GM12878 (cell line): ENCODE measurements at regions of chr3 and their contacts with region 1.

Region 1: GRCh38 chr3:121995161-121996137 is 26.6 kb downstream of the ILDR1 start:
- DNase-seq: peak; percentile 74
- ATAC-seq: peak; percentile 72
- H3K4me3 ChIP-seq: 0 out of 2 replicates have a peak overlapping the region, but pooled peaks have one; percentile 32
- H3K27ac ChIP-seq: peak overlapping the region; percentile 67
- H3K4me1 ChIP-seq: peaks cover 66% of the 10 kb centered on the region
- H3K27me3 ChIP-seq: no peaks in the 10 kb centered on the region
- CTCF ChIP-seq: peak; percentile 56 to 71 (median 59)
- EP300 ChIP-seq: no peak; a peak in 1 of 4 replicates
- POLR2A ChIP-seq: no peak
- RAD21 ChIP-seq: peak; percentile 59

Region 2: DNA sequence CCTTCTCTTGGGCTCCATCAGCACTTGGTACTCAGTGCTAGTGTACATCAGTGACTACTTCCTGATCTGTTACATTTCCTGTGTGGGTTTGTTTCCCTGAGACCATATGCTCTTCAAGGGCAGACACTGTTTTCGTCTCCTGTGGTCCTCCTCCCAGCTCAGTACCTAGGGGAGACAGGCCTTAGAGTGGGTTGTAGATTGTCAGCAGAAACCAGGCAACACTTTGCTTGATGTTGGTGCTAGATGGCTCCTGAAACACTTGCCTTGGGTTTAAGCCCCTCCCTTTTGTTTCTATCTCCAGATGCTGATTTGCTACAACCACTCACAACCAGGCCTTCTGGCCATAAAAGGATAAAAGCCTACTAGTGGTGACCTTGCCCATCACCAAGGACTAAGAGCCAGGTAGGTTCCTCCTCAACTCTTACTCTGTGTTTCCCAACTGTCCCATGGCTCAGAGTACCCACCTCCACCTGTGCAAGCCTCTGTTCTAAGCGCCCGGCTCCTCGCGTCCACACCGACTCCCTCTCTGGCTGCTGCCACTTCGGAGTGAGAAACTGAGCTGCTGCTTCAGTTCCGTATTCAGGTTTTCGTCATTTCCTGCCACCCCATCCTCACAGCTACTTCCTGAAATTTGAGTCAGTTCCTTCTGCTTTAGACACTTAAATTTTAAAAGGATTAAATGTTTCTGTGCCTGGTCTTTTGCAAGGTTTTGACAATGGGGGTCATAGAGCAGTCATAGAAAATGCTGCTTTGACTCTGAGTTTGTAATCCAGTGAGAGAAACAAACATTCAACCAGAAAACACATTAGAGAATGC is 334.9 kb before region 1 on chr3 and contains the start of gene HCLS1:
- CTCF ChIA-PET with region 1: no interaction called
- POLR2A ChIA-PET with region 1: no interaction called
- RAD21 ChIA-PET with region 1: no interaction called
- SMC1A ChIA-PET with region 1: interaction called, 3 read pairs
- in situ Hi-C with region 1: no loop called
- intact Hi-C with region 1: loop called (anchors 10 kb)
- DNase-seq: peak; percentile 83
- ATAC-seq: peak; percentile 91
- H3K4me3 ChIP-seq: peak within 1 kb of the TSS; percentile 61
- H3K27ac ChIP-seq: peak within 1 kb of the TSS; percentile 97
- H3K4me1 ChIP-seq: peaks cover 26% of the 10 kb centered on the region
- H3K27me3 ChIP-seq: no peaks in the 10 kb centered on the region
- CTCF ChIP-seq: no peak
- EP300 ChIP-seq: 0 out of 4 replicates have a peak, but pooled peaks of 1 of the 2 experiments have one; percentile 25
- POLR2A ChIP-seq: peak; percentile 99
- RAD21 ChIP-seq: no peak
- polyA plus RNA-seq, gene HCLS1: 51.6 to 76.2 TPM

Region 3: GRCh38 chr3:121979734-121980449 is 15.6 kb before region 1 on chr3:
- CTCF ChIA-PET with region 1: interaction called, 5 read pairs
- POLR2A ChIA-PET with region 1: interaction called, 7 read pairs
- RAD21 ChIA-PET with region 1: interaction called, 4 read pairs
- SMC1A ChIA-PET with region 1: interaction called, 18 read pairs
- in situ Hi-C with region 1: no loop called
- intact Hi-C with region 1: no loop called
- DNase-seq: no peak
- ATAC-seq: peak; percentile 85
- H3K4me3 ChIP-seq: no peak overlapping the region
- H3K27ac ChIP-seq: peak overlapping the region; percentile 58
- H3K4me1 ChIP-seq: peaks cover 15% of the 10 kb centered on the region
- H3K27me3 ChIP-seq: no peaks in the 10 kb centered on the region
- CTCF ChIP-seq: no peak
- EP300 ChIP-seq: no peak
- POLR2A ChIP-seq: no peak
- RAD21 ChIP-seq: no peak

Region 4: GRCh38 chr3:122030381-122031122 is 35.1 kb after region 1 on chr3:
- CTCF ChIA-PET with region 1: interaction called, 9 read pairs
- POLR2A ChIA-PET with region 1: interaction called, 120 read pairs
- RAD21 ChIA-PET with region 1: interaction called, 17 read pairs
- SMC1A ChIA-PET with region 1: interaction called, 454 read pairs
- in situ Hi-C with region 1: no loop called
- intact Hi-C with region 1: loop called (anchors 5 kb)
- DNase-seq: peak; percentile 74
- ATAC-seq: peak; percentile 86
- H3K4me3 ChIP-seq: peak overlapping the region; percentile 41; the same call in 1 of the 2 replicates
- H3K27ac ChIP-seq: peak overlapping the region; percentile 89
- H3K4me1 ChIP-seq: peaks cover 37% of the 10 kb centered on the region
- H3K27me3 ChIP-seq: no peaks in the 10 kb centered on the region
- CTCF ChIP-seq: no peak
- EP300 ChIP-seq: no peak
- POLR2A ChIP-seq: 0 out of 2 replicates have a peak, but pooled peaks have one; percentile 25
- RAD21 ChIP-seq: peak; percentile 11; the same call in 1 of the 2 replicates

Region 5: DNA sequence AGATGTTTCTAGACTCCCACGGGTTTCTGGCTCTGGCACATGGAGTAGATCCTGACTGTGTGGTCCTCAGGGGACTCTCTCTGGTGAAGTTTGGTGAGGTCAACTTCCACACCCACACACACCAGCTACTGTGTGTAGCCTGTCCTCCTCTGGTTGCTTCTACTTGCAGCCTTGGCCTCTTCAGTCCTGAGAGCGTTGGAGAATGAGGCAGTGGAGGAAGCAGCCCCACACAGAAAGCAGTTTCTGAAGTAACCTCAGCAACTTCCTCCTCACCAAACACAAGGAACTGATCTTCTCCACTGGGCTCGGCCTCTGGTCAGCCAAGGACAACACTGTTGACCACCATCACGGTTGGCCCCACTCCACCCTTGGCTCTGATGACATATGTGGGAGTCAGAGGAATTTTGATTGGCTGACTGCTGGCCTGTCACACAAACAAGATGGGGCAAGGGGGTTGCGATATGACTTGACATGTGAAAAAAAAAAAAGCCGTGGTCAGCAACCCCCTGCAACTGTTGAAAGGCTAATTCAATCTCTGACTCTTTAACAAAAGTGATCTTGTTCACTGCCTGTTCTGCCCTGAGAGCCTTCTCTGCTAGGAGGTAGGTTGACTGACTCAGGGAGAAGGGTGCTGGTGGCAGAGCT is 79.3 kb after region 1 on chr3:
- CTCF ChIA-PET with region 1: interaction called, 33 read pairs
- POLR2A ChIA-PET with region 1: interaction called, 8 read pairs
- RAD21 ChIA-PET with region 1: interaction called, 93 read pairs
- SMC1A ChIA-PET with region 1: interaction called, 882 read pairs
- in situ Hi-C with region 1: loop called (anchors 5 kb)
- intact Hi-C with region 1: no loop called
- DNase-seq: peak; percentile 92
- ATAC-seq: peak; percentile 70
- H3K4me3 ChIP-seq: peak overlapping the region; percentile 72
- H3K27ac ChIP-seq: peak overlapping the region; percentile 97
- H3K4me1 ChIP-seq: peaks cover 45% of the 10 kb centered on the region
- H3K27me3 ChIP-seq: no peaks in the 10 kb centered on the region
- CTCF ChIP-seq: no peak
- EP300 ChIP-seq: peak; percentile 65 to 76
- POLR2A ChIP-seq: peak; percentile 73
- RAD21 ChIP-seq: no peak

Region 6: DNA sequence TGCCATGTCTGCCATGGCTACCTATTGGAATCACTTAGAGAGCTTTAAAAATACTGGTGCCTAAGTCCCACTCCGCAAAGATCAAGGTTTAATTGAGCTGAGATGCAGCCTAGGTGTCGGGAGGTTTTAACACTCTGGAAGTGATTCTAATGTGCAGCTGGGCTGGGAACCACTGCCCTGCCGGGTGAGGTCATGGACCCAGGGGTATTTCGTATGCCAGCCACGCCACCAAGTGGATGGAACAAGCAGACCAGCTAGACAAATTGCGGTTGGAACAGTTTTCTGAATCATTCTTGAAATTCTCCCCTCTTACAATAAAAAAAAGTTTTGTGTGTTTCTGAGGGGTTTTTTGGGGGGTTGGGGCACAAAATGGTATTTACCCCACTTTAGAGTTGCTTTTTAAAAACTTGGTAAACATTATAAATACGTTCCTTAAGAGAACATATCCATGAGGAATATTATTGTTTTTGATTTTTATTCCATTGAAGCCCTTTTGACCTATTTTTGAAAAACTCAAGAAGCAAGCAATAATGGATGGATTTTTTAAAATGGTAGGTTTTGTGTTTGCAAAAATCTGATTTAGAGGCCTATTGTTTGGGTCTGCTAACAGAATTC is 263.4 kb after region 1 on chr3:
- CTCF ChIA-PET with region 1: interaction called, 12 read pairs
- POLR2A ChIA-PET with region 1: interaction called, 5 read pairs
- RAD21 ChIA-PET with region 1: interaction called, 4 read pairs
- SMC1A ChIA-PET with region 1: interaction called, 13 read pairs
- in situ Hi-C with region 1: no loop called
- intact Hi-C with region 1: no loop called
- DNase-seq: peak; percentile 83
- ATAC-seq: peak; percentile 86
- H3K4me3 ChIP-seq: no peak overlapping the region
- H3K27ac ChIP-seq: peak overlapping the region; percentile 5; the same call in 1 of the 2 replicates
- H3K4me1 ChIP-seq: peaks cover 5% of the 10 kb centered on the region; the same call in 1 of the 2 replicates
- H3K27me3 ChIP-seq: no peaks in the 10 kb centered on the region
- CTCF ChIP-seq: peak; percentile 75 to 91 (median 88)
- EP300 ChIP-seq: peak; percentile 19 to 58; a peak in 1 of 4 replicates
- POLR2A ChIP-seq: no peak
- RAD21 ChIP-seq: peak; percentile 97